Gastrocnemius medialis (tissue), 4 donors: ENCODE measurements at regions of chr2 and their contacts with region 1.

Region 1: GRCh38 chr2:37925063-37925897 is at the start of gene RMDN2:
- DNase-seq: peak; percentile 90 to 93
- ATAC-seq: peak; percentile 97
- H3K4me3 ChIP-seq: peak within 1 kb of the TSS; percentile 73 to 96 (median 86)
- H3K27ac ChIP-seq: peak within 1 kb of the TSS; percentile 88 to 96 (median 94)
- H3K4me1 ChIP-seq: peaks cover 0 to 11% of the 10 kb centered on the region in 2 donors
- H3K27me3 ChIP-seq: no peaks in the 10 kb centered on the region
- CTCF ChIP-seq: no peak
- POLR2A ChIP-seq: peak; percentile 68 to 80
- total RNA-seq, gene RMDN2: 2.7 to 6.3 (median 3.3) TPM

Region 2: GRCh38 chr2:37083873-37084794 is 841.1 kb before region 1 on chr2 and contains the starts of genes GPATCH11 and HEATR5B:
- in situ Hi-C with region 1: no loop called
- intact Hi-C with region 1: loop called (anchors 5 kb)
- DNase-seq: peak; percentile 95 to 96
- ATAC-seq: peak; percentile 99
- H3K4me3 ChIP-seq: peak within 1 kb of the TSS; percentile 65 to 96 (median 90)
- H3K27ac ChIP-seq: peak within 1 kb of the TSS; percentile 83 to 91 (median 84)
- H3K4me1 ChIP-seq: peaks cover 28 to 33% of the 10 kb centered on the region in 2 donors
- H3K27me3 ChIP-seq: no peaks in the 10 kb centered on the region
- CTCF ChIP-seq: no peak
- POLR2A ChIP-seq: peak; percentile 55
- total RNA-seq, gene GPATCH11: 2.5 to 3.7 (median 3.0) TPM
- total RNA-seq, gene HEATR5B: 6.8 to 10.0 (median 9.8) TPM

Region 3: GRCh38 chr2:38485734-38486133 is 560.5 kb after region 1 on chr2:
- in situ Hi-C with region 1: no loop called
- intact Hi-C with region 1: no loop called
- DNase-seq: peak in 1 of 2 donors; percentile 47
- ATAC-seq: peak; percentile 48 to 84
- H3K4me3 ChIP-seq: no peak overlapping the region
- H3K27ac ChIP-seq: peak overlapping the region; percentile 15 to 82 (median 69)
- H3K4me1 ChIP-seq: peaks cover 26 to 30% of the 10 kb centered on the region in 2 donors
- H3K27me3 ChIP-seq: no peaks in the 10 kb centered on the region
- CTCF ChIP-seq: peak in 3 of 5 experiments; percentile 8 to 40 (median 30)
- POLR2A ChIP-seq: no peak